ENCODE measurements at regions of chr1 and their contacts with region 1.

Region 1: GRCh38 chr1:16613185-16614147 is at the start of gene NBPF1:
- DNase-seq: peak; percentile 98
- ATAC-seq: peak; percentile 98
- H3K4me3 Mint-ChIP-seq: no peak within 1 kb of the TSS
- H3K27ac Mint-ChIP-seq: no peak within 1 kb of the TSS
- H3K4me1 Mint-ChIP-seq: no peaks in the 10 kb centered on the region
- H3K27me3 Mint-ChIP-seq: no peaks in the 10 kb centered on the region
- total RNA-seq, gene NBPF1: 5.8 to 6.2 TPM

Region 2: GRCh38 chr1:16351994-16352841 is 261.2 kb before region 1 on chr1 and contains the start of gene FBXO42:
- CTCF ChIA-PET with region 1: no interaction called
- POLR2A ChIA-PET with region 1: no interaction called
- intact Hi-C with region 1: loop called in 1 of 2 experiments (anchors 1 kb)
- DNase-seq: peak; percentile 95
- ATAC-seq: peak; percentile 92
- H3K4me3 Mint-ChIP-seq: peak within 1 kb of the TSS; percentile 96
- H3K27ac Mint-ChIP-seq: peak within 1 kb of the TSS; percentile 96
- H3K4me1 Mint-ChIP-seq: peaks cover 31% of the 10 kb centered on the region
- H3K27me3 Mint-ChIP-seq: no peaks in the 10 kb centered on the region
- total RNA-seq, gene FBXO42: 14.3 to 18.1 TPM

Region 3: DNA sequence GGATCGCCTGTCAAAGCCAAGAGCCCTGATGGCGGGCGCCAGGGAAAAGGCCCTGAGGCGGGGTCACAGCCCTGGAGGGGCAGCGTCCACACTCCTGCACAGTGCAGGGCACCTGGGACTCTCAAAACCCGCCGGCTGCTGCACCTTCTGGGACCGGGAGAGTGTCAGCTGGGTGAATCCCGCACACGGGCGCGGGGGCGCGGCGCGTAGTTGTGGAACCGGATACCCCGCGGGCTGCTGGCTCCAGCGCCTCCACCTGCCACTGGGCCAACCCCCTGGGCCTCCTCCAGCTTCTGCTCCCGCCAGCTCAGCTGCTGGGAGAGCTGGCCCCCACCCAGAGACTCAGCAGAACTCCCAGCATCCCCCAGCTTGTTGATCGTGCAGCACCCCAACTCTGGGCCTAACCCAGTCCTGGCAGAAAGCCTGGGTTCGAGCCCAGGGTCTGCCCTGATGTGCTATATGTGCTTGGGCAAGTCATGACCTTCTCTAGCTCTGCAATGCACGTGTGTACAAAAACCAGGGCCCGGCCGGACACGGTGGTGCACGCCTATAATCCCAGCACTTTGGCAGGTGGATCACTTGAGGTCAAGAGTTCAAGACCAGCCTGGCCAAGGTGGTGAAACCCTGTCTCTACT is 139.2 kb before region 1 on chr1:
- CTCF ChIA-PET with region 1: no interaction called
- POLR2A ChIA-PET with region 1: no interaction called
- intact Hi-C with region 1: no loop called
- DNase-seq: no peak
- ATAC-seq: no peak
- H3K4me3 Mint-ChIP-seq: no peak overlapping the region
- H3K27ac Mint-ChIP-seq: no peak overlapping the region
- H3K4me1 Mint-ChIP-seq: peaks cover 4% of the 10 kb centered on the region
- H3K27me3 Mint-ChIP-seq: no peaks in the 10 kb centered on the region

Region 4: DNA sequence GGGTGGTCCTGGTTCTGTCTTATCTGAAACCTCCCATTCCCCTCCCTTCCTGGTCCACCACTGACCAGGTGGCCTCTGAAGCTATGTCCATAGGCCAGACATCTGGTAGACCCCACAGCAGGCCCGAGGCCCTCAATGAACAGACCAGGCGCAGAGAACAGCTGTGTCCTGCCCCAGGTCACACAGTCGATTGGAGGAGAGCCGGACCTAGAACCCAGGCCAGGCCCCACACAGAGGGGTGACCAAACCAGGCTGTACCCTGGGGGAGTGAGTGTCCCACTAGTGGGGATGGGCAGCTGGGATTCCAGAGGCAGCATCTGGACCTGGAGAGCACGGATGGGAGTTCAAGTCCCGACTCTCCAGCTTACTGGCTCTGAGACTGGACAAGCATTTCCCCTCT is 128.5 kb before region 1 on chr1:
- CTCF ChIA-PET with region 1: no interaction called
- POLR2A ChIA-PET with region 1: no interaction called
- intact Hi-C with region 1: no loop called
- DNase-seq: no peak
- ATAC-seq: no peak
- H3K4me3 Mint-ChIP-seq: no peak overlapping the region
- H3K27ac Mint-ChIP-seq: no peak overlapping the region
- H3K4me1 Mint-ChIP-seq: no peaks in the 10 kb centered on the region
- H3K27me3 Mint-ChIP-seq: no peaks in the 10 kb centered on the region

Region 5: GRCh38 chr1:16498573-16499413 is 114.7 kb before region 1 on chr1:
- CTCF ChIA-PET with region 1: no interaction called
- POLR2A ChIA-PET with region 1: no interaction called
- intact Hi-C with region 1: loop called in 1 of 2 experiments (anchors 1 kb)
- DNase-seq: peak; percentile 91
- ATAC-seq: peak; percentile 94
- H3K4me3 Mint-ChIP-seq: peak overlapping the region; percentile 74
- H3K27ac Mint-ChIP-seq: no peak overlapping the region
- H3K4me1 Mint-ChIP-seq: peaks cover 10% of the 10 kb centered on the region
- H3K27me3 Mint-ChIP-seq: no peaks in the 10 kb centered on the region

Region 6: GRCh38 chr1:16625497-16626408 is 12.3 kb after region 1 on chr1:
- CTCF ChIA-PET with region 1: interaction called, 32 read pairs
- POLR2A ChIA-PET with region 1: interaction called, 6 read pairs
- intact Hi-C with region 1: loop called in 1 of 2 experiments (anchors 1 kb)
- DNase-seq: no peak
- ATAC-seq: no peak
- H3K4me3 Mint-ChIP-seq: no peak overlapping the region
- H3K27ac Mint-ChIP-seq: no peak overlapping the region
- H3K4me1 Mint-ChIP-seq: no peaks in the 10 kb centered on the region
- H3K27me3 Mint-ChIP-seq: no peaks in the 10 kb centered on the region

Region 7: GRCh38 chr1:16904560-16905111 is 291.2 kb after region 1 on chr1:
- CTCF ChIA-PET with region 1: no interaction called
- POLR2A ChIA-PET with region 1: interaction called, 3 read pairs
- intact Hi-C with region 1: loop called in 1 of 2 experiments (anchors 1 kb)
- DNase-seq: peak; percentile 100
- ATAC-seq: peak; percentile 90
- H3K4me3 Mint-ChIP-seq: no peak overlapping the region
- H3K27ac Mint-ChIP-seq: no peak overlapping the region
- H3K4me1 Mint-ChIP-seq: peaks cover 30% of the 10 kb centered on the region
- H3K27me3 Mint-ChIP-seq: no peaks in the 10 kb centered on the region

Region 8: GRCh38 chr1:16946646-16947045 is 333.2 kb after region 1 on chr1:
- CTCF ChIA-PET with region 1: interaction called, 11 read pairs
- POLR2A ChIA-PET with region 1: interaction called, 3 read pairs
- intact Hi-C with region 1: loop called (anchors 1 kb)
- DNase-seq: no peak
- ATAC-seq: no peak
- H3K4me3 Mint-ChIP-seq: no peak overlapping the region
- H3K27ac Mint-ChIP-seq: no peak overlapping the region
- H3K4me1 Mint-ChIP-seq: no peaks in the 10 kb centered on the region
- H3K27me3 Mint-ChIP-seq: no peaks in the 10 kb centered on the region

Region 9: GRCh38 chr1:17009706-17010105 is 396.2 kb after region 1 on chr1:
- CTCF ChIA-PET with region 1: no interaction called
- POLR2A ChIA-PET with region 1: no interaction called
- intact Hi-C with region 1: no loop called
- DNase-seq: no peak
- ATAC-seq: no peak
- H3K4me3 Mint-ChIP-seq: no peak overlapping the region
- H3K27ac Mint-ChIP-seq: no peak overlapping the region
- H3K4me1 Mint-ChIP-seq: peaks cover 20% of the 10 kb centered on the region
- H3K27me3 Mint-ChIP-seq: no peaks in the 10 kb centered on the region

Measured in activated CD4-positive, alpha-beta T cell treated with anti-CD3 and anti-CD28 coated beads for 36 hours (primary cell).